Common myeloid progenitor, CD34-positive (primary cell): ENCODE measurements at regions of chr4 and their contacts with region 1.

Region 1: DNA sequence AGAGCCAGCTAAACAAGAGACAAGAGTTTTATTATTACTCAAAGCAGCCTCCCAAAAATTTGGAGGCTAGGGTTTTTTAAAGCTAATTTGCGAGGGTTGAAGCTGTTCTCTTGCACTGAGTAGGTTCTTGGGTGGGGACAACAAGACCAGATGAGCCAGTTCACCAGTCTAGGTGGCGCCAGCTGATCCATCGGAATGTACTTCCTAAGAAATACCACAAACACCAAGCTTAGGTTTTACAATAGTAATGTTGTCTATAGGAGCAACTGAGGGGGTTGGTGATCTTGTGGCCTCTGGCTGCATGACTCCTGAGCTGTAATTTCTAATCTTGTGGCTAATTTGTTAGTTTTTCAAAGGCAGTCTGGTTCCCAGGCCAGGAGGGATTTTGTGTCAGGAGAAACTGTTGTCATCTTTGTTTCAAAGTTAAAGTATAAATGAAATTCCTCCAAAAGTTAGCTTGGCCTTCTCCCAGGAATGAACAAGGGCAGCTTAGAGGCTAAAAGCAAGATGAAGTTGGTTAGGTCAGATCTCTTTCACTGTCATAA is 130.6 kb downstream of the SLC7A11 start:
- DNase-seq: no peak
- H3K4me3 ChIP-seq: no peak overlapping the region
- H3K27ac ChIP-seq: no peak overlapping the region
- H3K4me1 ChIP-seq: no peaks in the 10 kb centered on the region
- H3K27me3 ChIP-seq: no peaks in the 10 kb centered on the region

Region 2: GRCh38 chr4:138090150-138090917 is 21.2 kb before region 1 on chr4:
- CTCF ChIA-PET with region 1: interaction called, 14 read pairs
- POLR2A ChIA-PET with region 1: interaction called, 3 read pairs
- DNase-seq: peak; percentile 29 to 56 (median 44)
- H3K4me3 ChIP-seq: no peak overlapping the region
- H3K27ac ChIP-seq: no peak overlapping the region
- H3K4me1 ChIP-seq: no peaks in the 10 kb centered on the region
- H3K27me3 ChIP-seq: peaks cover 0 to 10% (median 4%) of the 10 kb centered on the region in 5 experiments